Dorsolateral prefrontal cortex (tissue), 120 donors: ENCODE measurements at regions of chr2 and their contacts with region 1.

Region 1: DNA sequence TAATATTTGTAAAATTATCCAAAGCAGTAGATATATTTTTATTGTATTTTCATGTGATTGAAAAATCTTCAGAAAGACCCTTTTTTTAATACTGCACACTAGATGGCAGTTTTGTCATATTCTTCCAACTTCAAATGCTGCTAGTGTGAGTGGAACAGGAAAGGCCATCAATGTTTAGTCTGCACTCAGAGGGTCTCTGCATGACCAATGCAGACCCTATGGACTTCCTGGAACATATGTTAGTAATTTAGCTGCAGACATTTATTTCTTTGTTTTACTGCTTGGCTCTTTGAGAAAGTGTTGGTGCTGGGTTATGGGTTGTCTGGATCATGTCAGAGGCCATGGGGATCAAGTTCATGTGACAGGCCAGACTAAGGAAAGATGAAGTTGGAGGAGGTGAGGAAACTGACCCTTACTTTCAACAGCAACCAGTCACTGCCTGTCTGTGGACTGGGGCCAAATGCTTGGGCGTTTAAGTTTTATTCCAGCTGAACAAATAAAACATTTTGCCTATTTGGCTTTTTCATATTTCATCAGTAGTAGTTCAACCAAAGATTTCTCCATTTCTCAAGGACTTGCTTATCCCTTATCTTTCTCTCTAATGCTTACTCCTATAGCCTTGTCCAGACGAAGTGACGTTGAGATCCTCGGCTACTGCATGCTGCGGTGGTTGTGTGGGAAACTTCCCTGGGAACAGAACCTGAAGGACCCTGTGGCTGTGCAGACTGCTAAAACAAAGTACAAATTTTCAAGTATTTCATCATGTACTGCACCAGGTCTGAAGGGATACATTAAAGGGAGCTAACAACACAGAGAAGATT is 84.8 kb downstream of the VRK2 start:
- DNase-seq: no peak
- H3K4me3 ChIP-seq: no peak overlapping the region
- H3K27ac ChIP-seq: peak overlapping the region in 52 of 59 donors; percentile 5 to 78 (median 57)
- H3K27me3 ChIP-seq: no peaks in the 10 kb centered on the region
- CTCF ChIP-seq: peak in 54 of 56 donors; percentile 30 to 81 (median 60)

Region 2: DNA sequence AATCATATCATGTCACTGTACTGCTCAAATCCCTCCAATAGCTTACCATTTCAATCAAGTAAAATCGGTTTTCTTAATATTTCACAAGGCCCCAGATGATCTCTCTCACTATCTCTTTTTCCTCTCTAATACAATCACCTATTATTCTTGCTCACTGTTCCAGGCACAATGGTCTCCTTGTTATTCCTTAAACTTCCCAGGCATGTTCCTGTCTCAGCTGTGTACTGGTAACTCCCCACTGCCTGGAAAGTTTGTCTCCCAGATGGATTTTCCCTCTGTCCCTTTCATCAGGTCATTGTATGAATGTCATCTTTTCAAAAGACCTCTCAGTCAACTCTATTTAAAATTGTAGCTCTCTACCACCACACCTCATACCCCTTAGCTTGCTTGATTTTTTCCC is 140.4 kb after region 1 on chr2:
- intact Hi-C with region 1: no loop called
- DNase-seq: no peak
- H3K4me3 ChIP-seq: peak overlapping the region in 1 of 59 donors; percentile 8
- H3K27ac ChIP-seq: peak overlapping the region in 39 of 59 donors; percentile 10 to 85 (median 48)
- H3K27me3 ChIP-seq: no peaks in the 10 kb centered on the region
- CTCF ChIP-seq: no peak

Region 3: DNA sequence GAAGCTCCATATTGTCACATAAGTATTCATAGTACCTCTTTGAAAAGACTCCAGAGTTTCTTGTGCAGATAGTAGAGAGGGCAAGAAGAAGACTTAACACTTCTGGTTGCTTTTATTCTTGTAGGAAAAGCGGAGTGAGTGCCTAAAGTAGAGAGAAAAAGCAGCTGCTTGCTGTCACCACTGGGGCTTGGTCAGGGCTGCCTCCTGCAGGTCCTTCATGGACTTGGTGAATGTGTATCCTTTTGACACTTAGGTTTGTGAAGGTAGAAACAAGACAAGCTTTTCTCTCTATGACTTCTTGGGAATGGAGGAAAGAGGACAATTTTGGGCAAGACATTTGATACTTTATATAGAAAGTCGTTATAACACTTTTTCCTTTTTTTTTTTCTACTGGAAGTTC is 422.5 kb after region 1 on chr2:
- intact Hi-C with region 1: loop called in 1 of 2 experiments (anchors 10 kb)
- DNase-seq: peak in 3 of 10 donors; percentile 35 to 64 (median 50)
- H3K4me3 ChIP-seq: no peak overlapping the region
- H3K27ac ChIP-seq: no peak overlapping the region
- H3K27me3 ChIP-seq: peaks cover 0 to 1% (median 0%) of the 10 kb centered on the region in 45 donors
- CTCF ChIP-seq: peak in 52 of 56 donors; percentile 12 to 75 (median 48)